Activated CD8-positive, alpha-beta T cell treated with anti-CD3 and anti-CD28 coated beads for 36 hours (primary cell): ENCODE measurements at regions of chr9 and their contacts with region 1.

Region 1: GRCh38 chr9:129796029-129796910 is 6.7 kb upstream of the TOR1B start:
- DNase-seq: no peak
- ATAC-seq: no peak
- H3K4me3 Mint-ChIP-seq: no peak overlapping the region
- H3K27ac Mint-ChIP-seq: no peak overlapping the region
- H3K4me1 Mint-ChIP-seq: no peaks in the 10 kb centered on the region
- H3K27me3 Mint-ChIP-seq: no peaks in the 10 kb centered on the region
- CTCF ChIP-seq: no peak

Region 2: DNA sequence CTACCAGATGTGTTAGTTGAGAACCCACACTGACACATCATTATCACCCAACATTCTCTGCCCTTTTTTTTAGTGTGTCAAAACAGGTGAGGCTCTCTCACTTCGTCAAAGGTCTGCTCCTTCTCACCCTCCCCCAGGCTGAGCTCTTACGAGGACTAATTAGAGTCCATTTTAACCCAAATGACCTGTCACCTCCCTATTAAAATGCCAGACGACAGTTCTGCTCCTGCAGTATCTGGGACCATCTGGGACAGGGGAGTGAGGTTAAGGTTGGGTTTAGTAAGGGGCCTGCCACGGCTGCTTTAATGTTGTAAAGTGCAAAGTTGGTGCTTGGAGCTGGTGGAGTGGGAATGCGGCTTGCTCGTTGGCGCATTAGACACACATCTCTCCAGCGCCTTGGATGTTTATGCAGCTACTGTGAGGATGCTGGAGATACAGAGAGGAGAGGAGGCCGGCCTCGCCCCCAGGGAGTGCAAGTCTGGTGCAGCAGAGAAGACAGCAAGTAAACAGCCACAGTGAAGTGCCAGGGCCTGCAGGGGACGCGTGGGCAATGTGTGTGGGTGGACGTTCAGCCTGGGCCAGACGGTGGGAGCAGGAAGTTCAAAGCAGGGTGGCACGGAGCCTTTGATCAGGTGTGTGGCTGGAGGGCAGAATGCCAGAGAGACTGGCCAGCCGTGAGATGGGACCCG is 271.5 kb before region 1 on chr9:
- CTCF ChIA-PET with region 1: no interaction called
- POLR2A ChIA-PET with region 1: no interaction called
- intact Hi-C with region 1: no loop called
- DNase-seq: no peak
- ATAC-seq: no peak
- H3K4me3 Mint-ChIP-seq: no peak overlapping the region
- H3K27ac Mint-ChIP-seq: no peak overlapping the region
- H3K4me1 Mint-ChIP-seq: peaks cover 1% of the 10 kb centered on the region
- H3K27me3 Mint-ChIP-seq: peaks cover 2% of the 10 kb centered on the region
- CTCF ChIP-seq: no peak

Region 3: DNA sequence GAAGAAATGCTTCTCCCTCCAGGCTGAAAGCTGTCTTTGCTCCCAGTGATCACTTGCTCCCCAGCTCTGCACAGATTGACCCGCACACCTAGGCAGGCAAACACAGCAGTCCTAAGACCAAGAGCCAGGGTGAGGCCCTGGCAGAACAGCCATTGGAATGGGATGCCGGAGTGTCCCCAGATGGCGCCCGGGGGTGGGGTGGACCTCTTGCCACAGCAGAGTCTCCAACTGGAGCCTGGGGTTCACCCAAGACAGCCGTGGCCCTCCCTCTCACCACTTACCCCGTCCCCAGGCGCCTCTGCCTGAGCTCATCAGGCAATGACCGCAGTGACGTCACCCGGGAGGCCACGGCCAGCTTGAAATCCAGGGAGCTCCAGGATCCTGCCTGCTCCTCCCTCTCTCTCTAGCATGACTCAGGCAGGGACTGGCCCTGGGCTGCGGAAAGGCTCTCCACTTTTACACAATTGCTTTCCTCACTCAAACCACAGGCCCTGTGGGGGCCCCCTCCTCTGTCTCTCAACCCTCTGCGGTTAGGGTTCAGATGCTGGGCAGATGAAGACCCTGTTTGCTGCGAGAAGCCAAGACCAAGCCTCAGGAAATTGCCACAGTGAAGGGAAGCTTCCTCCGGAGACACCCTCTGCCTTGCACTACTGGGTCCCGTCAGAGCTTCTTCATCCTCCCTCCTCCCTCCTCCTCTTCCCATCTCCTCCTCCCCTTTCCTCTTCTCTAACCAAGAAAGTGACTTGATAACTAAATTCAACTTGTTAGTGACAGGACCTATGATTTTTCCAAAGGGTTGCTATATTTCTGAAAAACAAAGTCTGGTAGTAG is 19.1 kb before region 1 on chr9:
- CTCF ChIA-PET with region 1: interaction called, 14 read pairs
- POLR2A ChIA-PET with region 1: no interaction called
- intact Hi-C with region 1: no loop called
- DNase-seq: peak; percentile 91
- ATAC-seq: peak; percentile 83
- H3K4me3 Mint-ChIP-seq: no peak overlapping the region
- H3K27ac Mint-ChIP-seq: no peak overlapping the region
- H3K4me1 Mint-ChIP-seq: peaks cover 15% of the 10 kb centered on the region
- H3K27me3 Mint-ChIP-seq: peaks cover 6% of the 10 kb centered on the region
- CTCF ChIP-seq: no peak

Region 4: GRCh38 chr9:129783516-129784361 is 12.5 kb before region 1 on chr9:
- CTCF ChIA-PET with region 1: interaction called, 14 read pairs
- POLR2A ChIA-PET with region 1: no interaction called
- intact Hi-C with region 1: no loop called
- DNase-seq: peak; percentile 79
- ATAC-seq: peak; percentile 99
- H3K4me3 Mint-ChIP-seq: no peak overlapping the region
- H3K27ac Mint-ChIP-seq: no peak overlapping the region
- H3K4me1 Mint-ChIP-seq: peaks cover 2% of the 10 kb centered on the region
- H3K27me3 Mint-ChIP-seq: no peaks in the 10 kb centered on the region
- CTCF ChIP-seq: peak; percentile 92

Region 5: GRCh38 chr9:129863059-129863690 is 66.9 kb after region 1 on chr9:
- CTCF ChIA-PET with region 1: no interaction called
- POLR2A ChIA-PET with region 1: no interaction called
- intact Hi-C with region 1: no loop called
- DNase-seq: peak; percentile 92
- ATAC-seq: peak; percentile 78
- H3K4me3 Mint-ChIP-seq: peak overlapping the region; percentile 44
- H3K27ac Mint-ChIP-seq: peak overlapping the region; percentile 88
- H3K4me1 Mint-ChIP-seq: peaks cover 67% of the 10 kb centered on the region
- H3K27me3 Mint-ChIP-seq: no peaks in the 10 kb centered on the region
- CTCF ChIP-seq: no peak